SK-N-SH (cell line): ENCODE measurements at regions of chr1 and their contacts with region 1.

Region 1: DNA sequence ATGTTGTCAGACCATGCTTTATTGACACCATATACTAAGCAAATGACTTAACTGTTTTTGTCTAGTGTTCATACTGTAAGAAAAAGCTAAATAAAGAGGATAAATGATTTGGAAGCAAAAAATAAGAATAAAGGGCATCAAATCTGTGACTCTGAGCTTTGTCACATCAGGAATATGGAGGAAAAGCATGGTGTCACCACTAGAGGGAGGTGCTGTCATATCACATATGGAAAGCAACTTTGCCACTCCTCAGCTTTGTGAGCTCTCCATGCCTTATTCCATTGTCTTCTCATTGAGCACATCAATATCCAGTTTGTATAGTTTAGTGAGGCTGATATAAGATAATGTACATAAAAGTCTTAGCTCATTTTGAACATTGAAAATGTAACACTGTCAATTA is 20.8 kb upstream of the GBP1 start:
- DNase-seq: peak; percentile 62
- H3K4me3 ChIP-seq: no peak overlapping the region
- H3K27ac ChIP-seq: no peak overlapping the region
- H3K4me1 ChIP-seq: peaks cover 0 to 4% of the 10 kb centered on the region in 2 experiments; a peak in 1 of 4 replicates
- H3K27me3 ChIP-seq: no peaks in the 10 kb centered on the region
- CTCF ChIP-seq: peak; percentile 83
- EP300 ChIP-seq: no peak
- RAD21 ChIP-seq: peak; percentile 92

Region 2: GRCh38 chr1:88897070-88897730 is 188.6 kb before region 1 on chr1:
- CTCF ChIA-PET with region 1: no interaction called
- POLR2A ChIA-PET with region 1: no interaction called
- DNase-seq: no peak
- H3K4me3 ChIP-seq: no peak overlapping the region
- H3K27ac ChIP-seq: no peak overlapping the region
- H3K4me1 ChIP-seq: no peaks in the 10 kb centered on the region
- H3K27me3 ChIP-seq: no peaks in the 10 kb centered on the region
- CTCF ChIP-seq: no peak
- EP300 ChIP-seq: no peak
- RAD21 ChIP-seq: no peak

Region 3: DNA sequence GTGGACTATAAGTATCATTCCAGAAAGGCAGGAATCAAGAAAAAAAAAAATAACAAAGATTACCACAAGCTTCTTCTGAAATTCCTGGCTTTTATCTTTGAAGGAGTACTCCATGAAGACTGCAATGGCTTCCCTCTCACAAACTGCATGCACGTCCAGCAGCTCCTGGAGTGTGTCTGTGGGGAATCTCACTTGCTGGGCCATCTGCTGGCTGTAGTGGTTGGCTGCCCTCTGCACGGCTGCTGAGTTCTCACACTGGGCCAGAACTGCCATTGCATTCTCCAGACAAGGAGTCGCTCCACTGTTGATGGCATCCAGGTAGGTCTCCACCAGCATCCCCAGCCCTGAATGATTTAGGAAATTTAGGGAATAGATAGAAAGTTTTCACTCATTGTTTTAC is 63.4 kb after region 1 on chr1:
- CTCF ChIA-PET with region 1: interaction called, 10 read pairs
- POLR2A ChIA-PET with region 1: no interaction called
- DNase-seq: no peak
- H3K4me3 ChIP-seq: no peak overlapping the region
- H3K27ac ChIP-seq: no peak overlapping the region
- H3K4me1 ChIP-seq: peaks cover 0 to 3% of the 10 kb centered on the region in 2 experiments; a peak in 1 of 4 replicates
- H3K27me3 ChIP-seq: no peaks in the 10 kb centered on the region
- CTCF ChIP-seq: peak; percentile 35; the same call in 1 of the 2 replicates
- EP300 ChIP-seq: no peak
- RAD21 ChIP-seq: peak; percentile 48

Region 4: DNA sequence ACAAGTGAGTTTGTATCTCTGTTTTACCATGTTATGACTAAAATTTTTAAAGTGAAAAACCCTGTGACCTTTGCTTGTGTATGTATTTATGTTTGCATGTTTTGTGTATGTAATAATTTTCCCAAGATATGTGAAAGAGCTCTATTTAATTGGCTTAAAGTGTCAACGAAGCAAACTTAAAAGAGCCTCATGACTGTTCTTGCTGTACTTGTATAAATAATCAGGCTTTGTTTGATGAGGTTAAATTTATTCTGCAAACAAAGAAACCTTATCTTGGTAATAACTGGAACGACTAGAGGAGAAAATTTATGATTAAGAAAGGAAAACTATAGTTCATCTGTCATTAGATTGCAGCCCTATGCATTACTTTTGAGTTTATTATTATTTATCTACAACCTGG is 83.4 kb after region 1 on chr1:
- CTCF ChIA-PET with region 1: no interaction called
- POLR2A ChIA-PET with region 1: no interaction called
- DNase-seq: no peak
- H3K4me3 ChIP-seq: no peak overlapping the region
- H3K27ac ChIP-seq: no peak overlapping the region
- H3K4me1 ChIP-seq: no peaks in the 10 kb centered on the region; a peak in 1 of 4 replicates
- H3K27me3 ChIP-seq: no peaks in the 10 kb centered on the region
- CTCF ChIP-seq: no peak
- EP300 ChIP-seq: no peak
- RAD21 ChIP-seq: no peak

Region 5: GRCh38 chr1:89358287-89358893 is 272.6 kb after region 1 on chr1:
- CTCF ChIA-PET with region 1: interaction called, 63 read pairs
- POLR2A ChIA-PET with region 1: no interaction called
- DNase-seq: peak; percentile 57
- H3K4me3 ChIP-seq: no peak overlapping the region
- H3K27ac ChIP-seq: no peak overlapping the region
- H3K4me1 ChIP-seq: peaks cover 0 to 1% of the 10 kb centered on the region in 2 experiments; a peak in 2 of 4 replicates
- H3K27me3 ChIP-seq: no peaks in the 10 kb centered on the region
- CTCF ChIP-seq: peak; percentile 82
- EP300 ChIP-seq: 0 out of 4 replicates have a peak, but pooled peaks of 1 of the 2 experiments have one; percentile 4
- RAD21 ChIP-seq: peak; percentile 91

Region 6: DNA sequence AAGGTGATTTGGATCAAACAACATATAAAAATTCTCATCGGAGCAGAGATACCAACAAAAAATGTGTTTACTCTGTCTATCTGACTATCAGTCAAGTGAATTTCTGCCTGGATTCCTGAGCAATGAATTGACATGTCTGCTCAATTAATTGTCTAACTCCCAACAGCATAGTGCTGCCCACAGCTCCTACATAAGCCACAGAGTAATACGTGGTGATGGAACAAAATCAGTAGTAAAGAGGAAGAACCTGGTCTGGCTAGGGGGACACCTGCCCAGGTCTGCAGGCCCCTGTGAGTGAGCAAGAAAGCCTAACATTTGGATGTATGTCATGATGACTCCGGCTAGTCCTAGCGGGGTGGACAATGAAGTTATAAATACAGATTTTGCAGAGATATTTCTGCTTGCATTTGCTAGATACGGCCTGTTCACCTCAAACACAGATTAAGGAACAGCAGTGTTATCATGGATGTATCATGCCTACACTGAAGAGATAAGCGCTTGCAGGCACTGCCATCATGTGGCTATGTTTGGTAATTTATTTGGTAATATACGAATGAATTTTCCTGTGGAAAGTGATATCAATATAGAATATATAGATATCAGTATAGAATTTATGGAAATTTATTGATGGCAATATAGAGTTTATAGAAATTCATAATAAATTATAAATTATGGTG is 369.2 kb after region 1 on chr1:
- CTCF ChIA-PET with region 1: interaction called, 34 read pairs
- POLR2A ChIA-PET with region 1: no interaction called
- DNase-seq: peak; percentile 61
- H3K4me3 ChIP-seq: no peak overlapping the region
- H3K27ac ChIP-seq: no peak overlapping the region
- H3K4me1 ChIP-seq: peaks cover 0 to 2% of the 10 kb centered on the region in 2 experiments; a peak in 1 of 4 replicates
- H3K27me3 ChIP-seq: no peaks in the 10 kb centered on the region
- CTCF ChIP-seq: peak; percentile 74
- EP300 ChIP-seq: no peak
- RAD21 ChIP-seq: peak; percentile 93